ENCODE measurements at regions of chr6 and their contacts with region 1.

Region 1: GRCh38 chr6:96532399-96532798 is 10.8 kb downstream of the UFL1 start:
- DNase-seq: no peak
- H3K4me3 ChIP-seq: no peak overlapping the region
- H3K4me3 Mint-ChIP-seq: no peak overlapping the region
- H3K27ac ChIP-seq: no peak overlapping the region
- H3K27ac Mint-ChIP-seq: peak overlapping the region in 1 of 7 donors; percentile 27
- H3K4me1 ChIP-seq: peaks cover 5% of the 10 kb centered on the region
- H3K4me1 Mint-ChIP-seq: peaks cover 12 to 37% (median 29%) of the 10 kb centered on the region in 4 donors
- H3K27me3 ChIP-seq: no peaks in the 10 kb centered on the region
- H3K27me3 Mint-ChIP-seq: no peaks in the 10 kb centered on the region

Region 2: GRCh38 chr6:96499781-96500180 is 32.6 kb before region 1 on chr6:
- CTCF ChIA-PET with region 1: interaction called, 11 read pairs
- POLR2A ChIA-PET with region 1: interaction called, 5 read pairs
- intact Hi-C with region 1: no loop called
- DNase-seq: peak; percentile 65 to 81 (median 77)
- H3K4me3 ChIP-seq: peak overlapping the region in 1 of 2 donors; percentile 41
- H3K4me3 Mint-ChIP-seq: peak overlapping the region in 7 of 8 donors; percentile 49 to 73 (median 61)
- H3K27ac ChIP-seq: peak overlapping the region; percentile 16
- H3K27ac Mint-ChIP-seq: peak overlapping the region; percentile 47 to 88 (median 84)
- H3K4me1 ChIP-seq: peaks cover 36% of the 10 kb centered on the region
- H3K4me1 Mint-ChIP-seq: peaks cover 30 to 47% (median 33%) of the 10 kb centered on the region in 4 donors
- H3K27me3 ChIP-seq: no peaks in the 10 kb centered on the region
- H3K27me3 Mint-ChIP-seq: peaks cover 0 to 1% of the 10 kb centered on the region in 2 donors

Region 3: GRCh38 chr6:96760153-96760687 is 227.8 kb after region 1 on chr6:
- CTCF ChIA-PET with region 1: no interaction called
- POLR2A ChIA-PET with region 1: no interaction called
- intact Hi-C with region 1: no loop called
- DNase-seq: no peak
- H3K4me3 ChIP-seq: no peak overlapping the region
- H3K4me3 Mint-ChIP-seq: no peak overlapping the region
- H3K27ac ChIP-seq: no peak overlapping the region
- H3K27ac Mint-ChIP-seq: no peak overlapping the region
- H3K4me1 ChIP-seq: no peaks in the 10 kb centered on the region
- H3K4me1 Mint-ChIP-seq: peaks cover 0 to 9% (median under 1%) of the 10 kb centered on the region in 4 donors
- H3K27me3 ChIP-seq: no peaks in the 10 kb centered on the region
- H3K27me3 Mint-ChIP-seq: peaks cover 0 to 1% of the 10 kb centered on the region in 2 donors